ENCODE measurements at regions of chr7 and their contacts with region 1.

Region 1: GRCh38 chr7:50832744-50833143 is 50.0 kb upstream of the GRB10 start:
- DNase-seq: peak; percentile 80
- H3K4me3 Mint-ChIP-seq: peak overlapping the region; percentile 48
- H3K27ac Mint-ChIP-seq: peak overlapping the region; percentile 64
- H3K4me1 Mint-ChIP-seq: peaks cover 27% of the 10 kb centered on the region
- H3K27me3 Mint-ChIP-seq: peaks cover 44% of the 10 kb centered on the region

Region 2: GRCh38 chr7:50455658-50456057 is 377.1 kb before region 1 on chr7:
- intact Hi-C with region 1: no loop called
- DNase-seq: no peak
- H3K4me3 Mint-ChIP-seq: no peak overlapping the region
- H3K27ac Mint-ChIP-seq: no peak overlapping the region
- H3K4me1 Mint-ChIP-seq: peaks cover 6% of the 10 kb centered on the region
- H3K27me3 Mint-ChIP-seq: peaks cover 19% of the 10 kb centered on the region

Region 3: DNA sequence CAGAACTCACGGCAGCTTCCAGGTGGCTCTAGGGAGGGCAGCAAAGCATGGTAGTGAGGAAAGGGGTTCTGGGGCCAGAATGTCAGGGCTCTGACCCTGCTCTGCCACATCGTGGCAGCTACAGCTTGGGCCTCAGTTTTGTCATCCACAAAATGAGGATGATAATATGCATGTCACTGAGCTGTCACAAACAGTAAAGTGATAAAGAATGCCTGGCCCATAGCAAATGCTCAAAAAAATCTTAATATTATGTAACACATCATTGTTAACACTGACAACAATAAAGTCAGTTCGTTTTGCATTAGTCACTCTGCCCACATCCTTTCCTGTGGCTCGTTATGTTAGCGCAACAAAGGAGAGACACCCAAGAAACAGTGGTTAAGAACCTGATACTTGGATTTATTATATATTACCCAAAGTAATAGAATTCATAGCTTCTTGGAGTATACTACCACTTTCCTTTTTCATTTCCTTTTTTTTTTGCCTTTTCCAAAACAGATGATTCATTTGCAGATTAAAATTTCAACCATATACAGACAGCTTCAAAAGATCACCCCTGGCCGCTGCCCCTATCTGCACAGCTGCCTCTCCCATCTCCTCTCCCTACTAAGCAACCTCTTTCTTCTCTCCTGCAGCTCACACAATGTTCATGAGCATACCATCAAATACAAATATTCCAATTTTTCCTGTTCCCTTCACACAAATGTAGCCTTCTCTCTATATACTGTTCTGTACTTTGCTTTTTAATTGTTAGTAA is 222.0 kb before region 1 on chr7:
- intact Hi-C with region 1: loop called (anchors 5 kb)
- DNase-seq: peak; percentile 86
- H3K4me3 Mint-ChIP-seq: no peak overlapping the region
- H3K27ac Mint-ChIP-seq: no peak overlapping the region
- H3K4me1 Mint-ChIP-seq: peaks cover 24% of the 10 kb centered on the region
- H3K27me3 Mint-ChIP-seq: peaks cover 22% of the 10 kb centered on the region

Region 4: DNA sequence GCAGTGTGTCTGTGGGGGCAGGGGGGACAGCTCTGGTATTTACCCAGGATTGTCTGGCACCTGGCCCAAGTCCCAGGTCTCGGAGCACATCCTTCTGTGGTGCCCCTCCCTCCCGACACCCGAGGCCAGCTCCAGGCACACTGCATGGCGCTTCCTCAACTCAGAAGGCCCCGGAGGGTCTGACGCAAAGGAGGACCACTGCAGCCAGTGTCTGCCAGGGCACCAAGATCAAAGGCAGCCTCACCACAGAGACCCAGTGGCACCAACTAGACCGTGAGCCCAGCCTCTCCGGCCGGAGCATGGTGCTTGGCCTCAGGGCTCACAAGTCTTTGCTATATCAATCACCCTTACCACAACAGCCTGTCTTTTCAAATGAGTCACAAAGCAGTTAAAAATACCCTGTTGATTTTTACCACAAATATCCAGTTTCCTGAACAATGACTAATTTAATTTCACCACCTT is 168.3 kb before region 1 on chr7:
- intact Hi-C with region 1: loop called (anchors 2 kb)
- DNase-seq: peak; percentile 68
- H3K4me3 Mint-ChIP-seq: no peak overlapping the region
- H3K27ac Mint-ChIP-seq: no peak overlapping the region
- H3K4me1 Mint-ChIP-seq: peaks cover 46% of the 10 kb centered on the region
- H3K27me3 Mint-ChIP-seq: peaks cover 2% of the 10 kb centered on the region

Region 5: DNA sequence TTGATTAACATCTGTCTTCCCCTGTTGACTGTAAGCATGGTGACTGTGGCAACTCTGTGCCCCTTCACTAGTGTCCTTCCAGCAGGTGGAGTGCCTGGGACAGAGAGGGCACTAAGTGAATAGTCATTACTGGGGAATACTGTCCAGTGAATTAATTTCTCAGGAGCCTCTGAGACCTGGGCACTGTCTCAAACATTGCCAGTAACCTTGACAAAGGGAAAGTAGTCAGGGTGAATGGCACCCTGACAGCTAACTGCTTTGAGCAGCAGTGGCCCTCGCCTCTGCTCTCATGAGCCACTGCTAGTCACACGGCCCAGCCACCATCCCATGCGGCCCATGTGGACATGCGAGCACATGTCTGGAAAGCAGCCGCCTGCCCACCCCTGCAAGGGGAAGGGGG is 36.9 kb before region 1 on chr7:
- intact Hi-C with region 1: loop called (anchors 2 kb)
- DNase-seq: no peak
- H3K4me3 Mint-ChIP-seq: no peak overlapping the region
- H3K27ac Mint-ChIP-seq: no peak overlapping the region
- H3K4me1 Mint-ChIP-seq: peaks cover 3% of the 10 kb centered on the region
- H3K27me3 Mint-ChIP-seq: peaks cover 53% of the 10 kb centered on the region

Region 6: DNA sequence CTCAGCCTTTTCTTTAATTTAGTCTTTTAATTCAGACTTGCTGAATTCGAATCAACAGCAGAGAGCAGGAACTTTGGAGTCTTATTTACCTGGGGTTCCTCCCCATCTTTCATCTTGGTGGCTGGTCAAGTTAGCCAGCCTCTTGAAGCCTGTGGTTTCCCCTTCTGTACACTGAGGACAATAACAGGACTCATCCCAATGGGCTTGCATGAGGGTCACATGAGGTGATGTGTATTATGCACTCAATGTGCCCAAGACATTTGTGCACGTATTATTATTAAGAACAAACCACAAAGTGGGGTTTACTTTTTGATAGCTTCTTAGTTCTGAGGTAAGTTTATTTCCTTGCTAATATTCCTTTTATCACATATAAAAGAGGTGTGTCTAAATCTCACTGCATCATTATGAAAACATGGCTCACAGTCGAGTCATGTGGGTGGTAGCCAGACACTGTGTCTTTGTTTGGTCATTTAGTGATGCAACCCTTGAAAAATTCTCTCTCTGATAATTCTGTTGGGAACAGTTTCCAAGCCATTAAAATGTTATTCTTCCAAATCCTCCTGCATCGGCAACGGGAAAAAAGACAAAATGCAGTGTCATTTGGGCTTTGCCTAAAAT is 36.5 kb after region 1 on chr7:
- intact Hi-C with region 1: no loop called
- DNase-seq: no peak
- H3K4me3 Mint-ChIP-seq: no peak overlapping the region
- H3K27ac Mint-ChIP-seq: no peak overlapping the region
- H3K4me1 Mint-ChIP-seq: no peaks in the 10 kb centered on the region
- H3K27me3 Mint-ChIP-seq: peaks cover 13% of the 10 kb centered on the region

Region 7: DNA sequence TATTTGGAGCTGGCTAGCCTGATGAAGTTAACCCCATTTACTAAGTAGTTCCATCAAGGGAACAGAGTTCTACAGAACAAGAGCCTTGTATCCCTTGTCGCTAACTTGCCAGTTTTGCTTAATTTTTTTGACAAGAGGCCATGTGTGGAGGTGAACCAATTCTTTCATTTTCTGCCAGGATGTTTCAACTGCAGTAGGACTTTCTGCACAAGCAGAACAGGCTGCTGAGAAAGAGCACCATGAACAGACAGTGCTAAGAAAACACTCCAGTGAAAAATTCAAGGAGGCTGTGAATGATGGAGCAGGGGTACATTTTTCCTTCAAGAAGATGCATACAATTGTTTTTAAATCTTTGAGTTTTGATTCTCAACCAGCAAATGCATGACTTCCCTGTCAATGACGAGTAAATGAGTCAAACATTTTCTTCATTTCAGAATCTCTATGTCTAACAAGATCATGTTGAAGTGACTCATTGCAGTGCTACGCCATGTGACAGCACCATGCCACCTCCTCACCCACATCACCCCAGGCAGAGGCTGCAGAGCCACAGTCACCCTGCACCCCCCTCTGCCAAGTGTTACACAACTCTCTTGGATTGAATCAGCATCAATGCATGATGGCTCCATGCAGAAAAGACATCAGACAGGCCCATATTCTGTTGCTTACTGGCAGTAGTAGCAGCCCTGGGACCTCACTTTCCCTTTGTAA is 290.7 kb after region 1 on chr7:
- intact Hi-C with region 1: loop called (anchors 1 kb)
- DNase-seq: peak; percentile 81
- H3K4me3 Mint-ChIP-seq: no peak overlapping the region
- H3K27ac Mint-ChIP-seq: peak overlapping the region; percentile 78
- H3K4me1 Mint-ChIP-seq: peaks cover 27% of the 10 kb centered on the region
- H3K27me3 Mint-ChIP-seq: no peaks in the 10 kb centered on the region

Region 8: DNA sequence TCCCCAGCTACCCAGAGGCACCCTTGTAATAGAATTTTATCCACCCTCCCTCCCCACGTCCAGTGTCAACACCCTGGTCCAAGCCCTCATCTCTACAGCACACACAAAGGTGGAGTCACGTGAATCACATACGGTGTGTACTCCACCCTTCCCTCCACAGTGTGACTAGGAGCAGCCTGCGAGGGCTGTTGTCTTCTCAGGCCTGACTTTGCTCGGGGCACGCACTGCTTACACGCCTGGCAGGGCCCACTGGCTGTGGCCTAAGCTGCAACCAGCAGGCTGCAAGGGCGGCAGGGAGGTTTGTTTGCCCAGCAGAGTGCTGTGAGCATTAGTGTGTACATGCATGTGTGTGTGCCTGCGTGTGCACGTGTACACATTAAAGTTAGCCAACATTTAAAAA is 390.2 kb after region 1 on chr7:
- intact Hi-C with region 1: no loop called
- DNase-seq: no peak
- H3K4me3 Mint-ChIP-seq: no peak overlapping the region
- H3K27ac Mint-ChIP-seq: no peak overlapping the region
- H3K4me1 Mint-ChIP-seq: no peaks in the 10 kb centered on the region
- H3K27me3 Mint-ChIP-seq: no peaks in the 10 kb centered on the region